ENCODE measurements at regions of chr17 and their contacts with region 1.

Region 1: DNA sequence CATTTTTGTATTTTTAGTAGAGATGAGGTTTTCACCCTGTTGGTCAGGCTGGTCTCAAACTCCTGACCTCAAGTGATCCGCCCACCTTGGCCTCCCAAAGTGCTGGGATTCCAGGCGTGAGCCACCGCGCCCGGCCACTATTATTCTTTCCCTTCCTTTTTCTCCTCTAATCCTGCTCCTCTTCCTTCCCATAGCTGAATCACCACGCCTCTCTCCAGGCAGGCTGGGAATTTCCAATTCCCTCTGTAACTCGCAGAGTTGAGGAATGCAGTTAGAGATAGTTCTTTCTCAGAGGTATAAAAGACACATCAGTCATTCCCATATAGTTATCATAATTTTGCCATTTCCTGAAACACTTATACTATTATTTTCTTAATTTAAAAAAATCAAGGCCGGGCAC is 11.2 kb downstream of the METTL16 start:
- DNase-seq: no peak
- ATAC-seq: no peak
- H3K4me3 Mint-ChIP-seq: no peak overlapping the region
- H3K27ac Mint-ChIP-seq: no peak overlapping the region
- H3K4me1 Mint-ChIP-seq: peaks cover 15% of the 10 kb centered on the region
- H3K27me3 Mint-ChIP-seq: no peaks in the 10 kb centered on the region
- CTCF ChIP-seq: no peak

Region 2: DNA sequence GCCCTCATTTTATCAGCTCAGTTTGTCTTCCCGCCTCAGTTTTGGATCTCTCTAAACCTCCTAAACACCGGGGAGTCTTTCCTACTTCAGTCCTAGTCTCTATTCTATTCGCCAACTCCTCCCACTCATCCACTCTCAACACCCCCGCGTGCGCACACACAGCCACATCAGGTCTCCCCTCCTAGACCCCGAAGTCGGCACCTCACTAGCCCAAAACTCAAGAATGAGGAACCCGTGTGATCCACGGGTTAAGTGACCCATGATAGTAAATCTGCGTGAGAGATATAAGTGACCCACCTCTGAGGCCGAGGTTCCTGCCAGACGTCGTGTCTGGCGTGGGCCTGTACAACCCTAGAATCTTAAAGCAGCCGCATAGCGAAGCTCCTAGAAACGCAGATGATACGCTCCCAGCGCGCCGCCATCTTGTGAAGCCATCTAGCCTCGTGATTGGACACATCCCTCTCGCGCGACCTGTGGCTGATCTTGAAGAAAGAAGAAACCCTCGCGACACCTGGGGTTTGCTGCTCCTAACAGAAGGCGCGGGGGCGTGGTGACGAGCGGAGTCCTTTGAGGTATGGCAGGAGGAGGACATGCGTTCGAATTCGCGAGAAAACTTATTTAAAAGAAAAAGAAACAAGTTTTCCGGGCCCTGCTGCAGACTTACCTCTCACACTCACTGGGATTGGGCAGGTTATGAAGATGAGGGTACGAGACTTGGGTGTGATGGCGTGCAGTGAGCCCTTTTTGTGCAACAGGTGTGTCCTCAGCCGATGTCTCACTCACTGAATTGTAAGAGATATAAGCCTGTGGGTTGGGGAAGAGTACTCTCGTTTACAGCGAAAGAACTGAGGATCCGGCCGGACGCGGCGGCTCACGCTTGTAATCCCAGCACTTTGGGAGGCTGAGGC is 11.3 kb after region 1 on chr17 and contains the start of gene METTL16:
- CTCF ChIA-PET with region 1: no interaction called
- POLR2A ChIA-PET with region 1: interaction called, 19 read pairs
- intact Hi-C with region 1: no loop called
- DNase-seq: peak; percentile 100
- ATAC-seq: peak; percentile 100
- H3K4me3 Mint-ChIP-seq: no peak within 1 kb of the TSS
- H3K27ac Mint-ChIP-seq: no peak within 1 kb of the TSS
- H3K4me1 Mint-ChIP-seq: peaks cover 23% of the 10 kb centered on the region
- H3K27me3 Mint-ChIP-seq: no peaks in the 10 kb centered on the region
- CTCF ChIP-seq: no peak
- total RNA-seq, gene METTL16: 47.9 to 50.3 TPM

Region 3: DNA sequence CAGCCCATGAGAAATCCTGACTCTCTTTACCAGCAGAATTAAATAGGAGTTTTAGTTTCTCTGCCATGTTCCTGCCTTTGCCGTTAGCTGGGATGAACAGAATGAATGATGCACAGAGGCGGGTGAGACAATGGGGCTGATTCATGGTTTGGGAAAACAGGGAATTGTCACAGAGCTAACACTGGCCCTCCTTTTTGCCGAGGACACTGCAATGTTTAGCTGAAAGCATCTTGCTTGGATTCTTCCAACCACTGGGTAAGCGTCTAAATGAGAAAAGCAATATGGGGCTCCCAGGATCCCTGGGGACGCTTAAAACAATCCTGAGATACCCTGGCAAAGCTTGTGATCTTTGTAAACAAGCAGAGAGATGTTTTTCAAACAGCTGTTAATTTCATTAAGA is 80.2 kb after region 1 on chr17:
- CTCF ChIA-PET with region 1: no interaction called
- POLR2A ChIA-PET with region 1: no interaction called
- intact Hi-C with region 1: no loop called
- DNase-seq: no peak
- ATAC-seq: no peak
- H3K4me3 Mint-ChIP-seq: no peak overlapping the region
- H3K27ac Mint-ChIP-seq: no peak overlapping the region
- H3K4me1 Mint-ChIP-seq: no peaks in the 10 kb centered on the region
- H3K27me3 Mint-ChIP-seq: peaks cover 3% of the 10 kb centered on the region
- CTCF ChIP-seq: no peak

Measured in activated CD8-positive, alpha-beta T cell treated with anti-CD3 and anti-CD28 coated beads for 36 hours (primary cell).